ENCODE measurements at regions of chr9 and their contacts with region 1.

Region 1: GRCh38 chr9:121317742-121318489 is 50.0 kb downstream of the GSN start:
- DNase-seq: peak in 1 of 2 donors; percentile 25
- ATAC-seq: peak; percentile 30

Region 2: DNA sequence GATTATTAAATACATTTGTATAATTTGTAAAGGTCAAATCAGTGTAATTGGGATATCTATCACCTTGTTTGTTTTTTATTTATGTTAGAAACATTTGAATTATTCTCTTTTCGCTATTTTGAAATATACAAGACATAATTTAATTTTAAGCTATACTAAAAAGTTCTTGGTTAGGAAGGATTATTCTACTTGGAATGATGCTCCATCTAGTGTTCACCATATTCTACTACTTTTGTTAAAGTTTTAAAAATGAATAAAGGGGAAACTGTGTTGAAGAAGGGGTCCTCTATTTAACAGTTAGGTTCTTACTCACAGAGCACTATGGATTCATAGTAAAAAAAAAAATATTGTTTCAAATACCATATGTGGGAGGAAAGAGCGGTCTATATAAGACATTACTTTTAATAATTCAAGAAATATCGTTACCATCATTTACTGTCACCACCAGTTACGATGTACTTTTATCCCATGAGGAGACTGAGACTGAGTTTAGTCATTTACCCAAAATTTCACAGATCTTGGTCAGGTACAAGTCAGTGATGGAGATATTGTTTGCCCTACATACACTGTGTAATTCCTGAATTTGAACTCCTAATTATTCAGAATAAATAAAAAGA is 58.4 kb after region 1 on chr9:
- intact Hi-C with region 1: loop called (anchors 5 to 10 kb)
- DNase-seq: no peak
- ATAC-seq: no peak

Region 3: GRCh38 chr9:121399883-121400607 is 82.1 kb after region 1 on chr9:
- intact Hi-C with region 1: loop called in 1 of 2 experiments (anchors 5 kb)
- DNase-seq: no peak
- ATAC-seq: peak; percentile 64

Region 4: GRCh38 chr9:121463026-121463807 is 145.3 kb after region 1 on chr9:
- intact Hi-C with region 1: no loop called
- DNase-seq: peak in 1 of 2 donors; percentile 34
- ATAC-seq: no peak

Measured in left colon (tissue), 2 donors.